ENCODE measurements at regions of chr2 and their contacts with region 1.

Region 1: GRCh38 chr2:240024766-240025165 is 376 bp downstream of the NDUFA10 start:
- DNase-seq: peak in 1 of 2 donors; percentile 61
- H3K4me3 ChIP-seq: peak overlapping the region; percentile 81 to 89
- H3K27ac ChIP-seq: peak overlapping the region; percentile 97 to 98
- H3K4me1 ChIP-seq: peaks cover 0 to 15% (median 11%) of the 10 kb centered on the region in 4 donors
- H3K27me3 ChIP-seq: no peaks in the 10 kb centered on the region
- CTCF ChIP-seq: no peak

Region 2: DNA sequence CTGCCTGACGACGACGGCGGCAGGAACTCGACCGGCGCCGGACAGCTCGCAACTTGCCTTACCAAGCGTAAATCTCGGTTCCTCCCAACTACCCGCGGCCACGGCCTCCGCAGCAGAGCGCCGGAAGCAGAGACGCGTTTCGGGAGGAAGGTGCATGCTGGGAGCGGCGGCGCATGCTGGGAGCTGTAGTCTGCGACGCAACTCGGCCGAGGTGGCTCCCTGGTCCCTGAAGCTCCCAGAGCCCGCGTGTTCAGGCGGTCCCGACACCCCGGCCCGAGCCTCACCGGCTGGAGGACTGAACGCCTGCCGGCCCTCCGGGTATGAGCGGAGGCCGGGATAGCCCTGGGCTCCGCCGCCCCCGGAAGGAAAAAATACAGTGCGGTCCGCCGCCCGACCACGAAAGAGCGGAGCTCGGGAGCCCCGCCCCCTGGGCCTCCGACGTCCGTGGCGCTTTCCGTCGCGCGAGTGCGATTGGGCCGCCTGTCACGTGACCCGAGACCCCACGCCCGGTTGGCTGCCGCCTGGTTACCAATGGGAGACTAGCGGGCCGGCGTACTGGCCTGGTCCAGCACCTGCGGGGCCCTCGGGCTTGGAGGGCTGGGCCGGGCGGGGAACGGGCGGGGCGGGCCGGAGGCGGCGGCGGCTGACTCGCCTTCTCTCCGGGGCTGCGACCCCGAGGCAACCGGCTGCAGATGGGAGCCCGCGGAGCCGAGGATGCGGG is 561.6 kb after region 1 on chr2 and contains the start of gene CAPN10:
- intact Hi-C with region 1: loop called (anchors 5 kb)
- DNase-seq: peak; percentile 98 to 99
- H3K4me3 ChIP-seq: peak within 1 kb of the TSS; percentile 82 to 87
- H3K27ac ChIP-seq: peak within 1 kb of the TSS; percentile 83 to 93
- H3K4me1 ChIP-seq: peaks cover 6 to 38% (median 33%) of the 10 kb centered on the region in 4 donors
- H3K27me3 ChIP-seq: no peaks in the 10 kb centered on the region
- CTCF ChIP-seq: no peak

Region 3: GRCh38 chr2:240926516-240927389 is 902.0 kb after region 1 on chr2:
- intact Hi-C with region 1: no loop called
- DNase-seq: peak; percentile 16 to 62
- H3K4me3 ChIP-seq: no peak overlapping the region
- H3K27ac ChIP-seq: no peak overlapping the region
- H3K4me1 ChIP-seq: peaks cover 0 to 2% (median under 1%) of the 10 kb centered on the region in 4 donors
- H3K27me3 ChIP-seq: peaks cover 0 to 34% of the 10 kb centered on the region in 2 donors
- CTCF ChIP-seq: no peak